Mucosa of descending colon (tissue), 3 donors: ENCODE measurements at regions of chr7 and their contacts with region 1.

Region 1: GRCh38 chr7:30276203-30276900 is 8.0 kb upstream of the ZNRF2 start:
- DNase-seq: peak in 1 of 3 donors; percentile 72
- ATAC-seq: peak; percentile 69
- H3K4me3 ChIP-seq: no peak overlapping the region
- H3K4me1 ChIP-seq: peaks cover 4% of the 10 kb centered on the region
- CTCF ChIP-seq: peak; percentile 42

Region 2: GRCh38 chr7:30412810-30413504 is 136.6 kb after region 1 on chr7:
- intact Hi-C with region 1: loop called in 1 of 2 experiments (anchors 10 kb)
- DNase-seq: peak in 1 of 3 donors; percentile 55
- ATAC-seq: peak; percentile 86
- H3K4me3 ChIP-seq: no peak overlapping the region
- H3K4me1 ChIP-seq: no peaks in the 10 kb centered on the region
- CTCF ChIP-seq: no peak